Activated CD4-positive, alpha-beta memory T cell treated with anti-CD3 and anti-CD28 coated beads, Interleukin-2, amount 10 ng/mL, durations not matched to agents 7 days and 5 days (primary cell): ENCODE measurements at regions of chr22 and their contacts with region 1.

Region 1: DNA sequence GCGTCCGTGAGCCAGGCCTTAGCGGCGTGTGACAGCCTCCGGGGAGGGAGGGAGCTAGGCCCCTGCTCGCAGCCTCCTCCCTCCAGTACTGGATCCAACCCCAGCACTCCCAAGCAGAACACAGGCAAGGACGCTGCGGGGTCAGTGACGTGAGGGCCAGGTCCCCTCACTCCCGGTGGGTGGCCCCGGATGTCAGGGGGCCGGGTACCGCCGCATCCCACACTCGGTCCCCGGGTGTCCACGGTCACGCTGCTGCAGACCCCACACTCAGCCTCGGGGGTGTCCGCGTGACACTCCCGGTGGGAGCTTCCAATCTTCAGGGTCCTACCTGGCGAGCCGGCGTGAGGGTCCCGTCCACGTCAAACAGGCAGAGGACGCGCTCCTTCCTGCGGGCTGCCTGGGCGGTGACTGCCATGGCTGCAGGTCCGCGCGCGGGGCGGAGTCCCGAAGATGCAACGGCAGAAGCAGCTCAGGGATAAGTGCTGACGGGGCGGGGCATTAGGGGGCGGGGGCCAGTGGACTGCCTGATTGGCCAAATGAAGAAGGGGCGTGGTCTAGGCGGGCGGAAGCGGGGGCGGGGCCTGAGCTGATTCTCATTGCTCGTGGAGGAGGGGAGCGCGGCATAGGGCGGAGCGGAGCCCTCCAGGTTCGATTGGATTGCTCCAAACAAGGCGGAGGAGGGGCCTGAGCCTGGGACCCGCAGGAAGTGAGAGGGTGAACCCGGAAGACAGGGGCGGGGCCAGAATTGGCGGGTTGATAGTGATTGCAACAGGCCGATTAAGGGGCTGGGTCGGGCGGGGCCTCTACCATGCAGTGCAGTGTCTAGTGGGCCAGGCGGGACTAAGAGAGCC is at the start of gene PMM1:
- DNase-seq: peak; percentile 100
- H3K4me3 Mint-ChIP-seq: peak within 1 kb of the TSS; percentile 96
- H3K27ac Mint-ChIP-seq: peak within 1 kb of the TSS; percentile 87
- H3K4me1 Mint-ChIP-seq: peaks cover 26% of the 10 kb centered on the region
- H3K27me3 Mint-ChIP-seq: no peaks in the 10 kb centered on the region
- total RNA-seq, gene PMM1: 44.4 to 46.2 TPM

Region 2: GRCh38 chr22:41381329-41382097 is 208.1 kb before region 1 on chr22 and contains the start of gene TEF:
- CTCF ChIA-PET with region 1: interaction called, 4 read pairs
- POLR2A ChIA-PET with region 1: interaction called, 11 read pairs
- DNase-seq: peak; percentile 98
- H3K4me3 Mint-ChIP-seq: peak within 1 kb of the TSS; percentile 88
- H3K27ac Mint-ChIP-seq: peak within 1 kb of the TSS; percentile 89
- H3K4me1 Mint-ChIP-seq: peaks cover 15% of the 10 kb centered on the region
- H3K27me3 Mint-ChIP-seq: peaks cover under 1% of the 10 kb centered on the region
- total RNA-seq, gene TEF: 2.3 to 3.3 TPM

Region 3: GRCh38 chr22:41448189-41448808 is 141.3 kb before region 1 on chr22:
- CTCF ChIA-PET with region 1: interaction called, 3 read pairs
- POLR2A ChIA-PET with region 1: interaction called, 13 read pairs
- DNase-seq: peak; percentile 94
- H3K4me3 Mint-ChIP-seq: peak overlapping the region; percentile 95
- H3K27ac Mint-ChIP-seq: peak overlapping the region; percentile 93
- H3K4me1 Mint-ChIP-seq: peaks cover 22% of the 10 kb centered on the region
- H3K27me3 Mint-ChIP-seq: no peaks in the 10 kb centered on the region

Region 4: DNA sequence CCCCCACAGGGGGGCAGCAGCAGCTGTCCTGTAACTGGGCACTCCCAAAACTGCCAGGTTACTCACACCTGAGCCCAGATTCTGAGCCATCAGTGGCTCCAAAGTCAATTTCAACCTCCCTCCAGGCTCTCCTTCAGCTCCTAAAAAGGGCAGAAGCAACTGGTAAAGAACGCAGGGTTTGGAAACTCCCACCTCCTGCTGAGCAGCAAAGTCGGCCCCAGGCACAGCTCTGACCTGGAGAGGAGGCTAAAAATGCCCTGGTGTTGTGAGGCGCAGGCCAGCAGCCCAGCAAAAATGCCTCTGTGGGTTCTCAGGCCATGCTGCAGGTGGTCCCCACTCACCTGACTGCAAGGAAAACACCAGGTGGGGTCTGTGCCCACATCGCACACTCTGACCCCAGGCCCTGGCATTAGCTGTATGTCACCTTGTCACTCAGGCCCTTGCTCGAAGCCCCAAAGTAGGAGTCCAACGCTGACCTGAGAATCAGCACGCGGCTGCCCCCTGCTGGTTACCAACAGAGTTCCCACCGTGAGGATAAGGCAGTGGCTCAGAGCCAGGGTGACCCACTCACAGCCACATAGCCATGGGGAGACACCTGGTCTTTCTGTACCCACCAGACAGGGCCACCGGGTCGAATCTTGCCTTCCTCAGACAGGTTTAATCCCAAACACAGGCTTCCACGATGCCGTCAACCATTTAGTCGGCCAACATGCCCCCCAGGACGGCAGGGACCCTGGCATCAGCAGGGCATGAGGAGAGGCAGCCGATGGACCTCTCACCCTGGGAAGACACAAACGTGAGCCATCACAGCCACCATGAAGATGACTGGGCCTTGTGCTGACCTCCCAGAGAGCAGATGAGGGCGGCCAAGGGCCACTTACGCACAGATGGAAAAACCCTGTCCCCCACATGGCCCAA is 56.4 kb before region 1 on chr22:
- CTCF ChIA-PET with region 1: no interaction called
- POLR2A ChIA-PET with region 1: no interaction called
- DNase-seq: peak; percentile 79
- H3K4me3 Mint-ChIP-seq: no peak overlapping the region
- H3K27ac Mint-ChIP-seq: peak overlapping the region; percentile 21
- H3K4me1 Mint-ChIP-seq: no peaks in the 10 kb centered on the region
- H3K27me3 Mint-ChIP-seq: no peaks in the 10 kb centered on the region

Region 5: DNA sequence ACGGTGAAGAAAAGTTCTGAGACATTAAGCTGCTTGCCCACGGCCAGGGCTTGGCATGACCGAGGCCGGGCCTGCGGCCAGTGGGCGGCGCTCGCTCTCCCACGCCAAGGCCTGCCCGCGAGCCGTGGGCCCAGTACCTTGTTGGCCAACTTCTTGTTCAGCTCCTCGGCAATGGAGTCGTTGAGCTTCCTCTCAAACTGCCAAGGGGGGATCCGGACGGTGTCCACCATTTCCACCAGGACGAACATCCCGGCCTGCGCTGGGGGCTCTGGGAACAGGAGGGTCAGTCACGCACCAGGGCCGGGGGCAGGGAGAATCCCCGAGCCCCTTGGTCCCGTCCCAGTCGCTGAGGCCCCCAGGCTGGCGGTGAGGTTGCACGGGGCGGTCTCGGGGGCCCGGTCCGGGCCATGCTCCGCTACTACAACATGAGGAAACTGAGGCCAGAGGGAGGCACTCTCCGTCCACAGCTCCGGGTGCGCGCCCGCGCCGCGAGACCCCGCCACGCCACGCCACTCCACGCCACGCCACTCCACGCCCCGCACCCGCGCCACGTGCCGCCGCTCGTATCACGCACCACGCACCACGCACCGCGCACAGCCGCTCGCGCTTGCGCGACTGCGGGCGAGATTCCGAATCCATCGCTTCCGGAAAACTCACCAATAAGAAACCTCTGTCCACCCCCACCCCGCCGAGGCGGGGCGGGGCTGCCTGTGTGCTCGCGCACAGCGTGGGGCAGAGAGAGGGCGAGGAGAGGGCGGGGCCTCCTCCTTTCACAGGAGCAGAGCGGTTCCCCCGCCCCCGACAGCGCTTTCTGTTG is 45.6 kb before region 1 on chr22 and contains the start of gene POLR3H:
- CTCF ChIA-PET with region 1: interaction called, 5 read pairs
- POLR2A ChIA-PET with region 1: interaction called, 14 read pairs
- DNase-seq: peak; percentile 97
- H3K4me3 Mint-ChIP-seq: peak within 1 kb of the TSS; percentile 98
- H3K27ac Mint-ChIP-seq: peak within 1 kb of the TSS; percentile 88
- H3K4me1 Mint-ChIP-seq: peaks cover 45% of the 10 kb centered on the region
- H3K27me3 Mint-ChIP-seq: no peaks in the 10 kb centered on the region
- total RNA-seq, gene POLR3H: 19.2 to 20.5 TPM

Region 6: GRCh38 chr22:41576877-41577276 is 12.7 kb before region 1 on chr22:
- CTCF ChIA-PET with region 1: interaction called, 15 read pairs
- POLR2A ChIA-PET with region 1: interaction called, 18 read pairs
- DNase-seq: peak; percentile 50
- H3K4me3 Mint-ChIP-seq: no peak overlapping the region
- H3K27ac Mint-ChIP-seq: no peak overlapping the region
- H3K4me1 Mint-ChIP-seq: peaks cover 6% of the 10 kb centered on the region
- H3K27me3 Mint-ChIP-seq: no peaks in the 10 kb centered on the region

Region 7: DNA sequence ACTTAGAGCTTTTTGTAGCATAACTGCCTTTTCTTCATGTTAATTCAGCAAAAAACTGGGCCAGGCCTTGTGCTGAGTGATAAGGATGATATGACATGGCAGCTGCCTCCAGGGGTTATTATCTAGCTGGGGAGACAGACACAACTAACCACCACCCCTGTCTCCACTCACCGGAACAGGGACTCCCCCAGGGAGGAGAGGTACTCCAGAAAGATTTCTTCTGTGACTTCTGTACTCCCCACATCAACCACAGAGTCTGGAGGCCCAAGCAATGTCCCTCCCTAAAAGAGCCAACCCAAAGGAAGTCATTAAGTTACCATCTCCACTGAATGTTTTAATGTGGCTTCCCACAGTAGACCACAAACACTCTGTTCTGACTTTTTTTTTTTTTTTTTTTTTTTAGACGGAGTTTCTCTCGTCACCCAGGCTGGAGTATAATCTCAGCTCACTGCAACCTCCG is 14.3 kb after region 1 on chr22:
- CTCF ChIA-PET with region 1: interaction called, 10 read pairs
- POLR2A ChIA-PET with region 1: interaction called, 23 read pairs
- DNase-seq: peak; percentile 77
- H3K4me3 Mint-ChIP-seq: peak overlapping the region; percentile 50
- H3K27ac Mint-ChIP-seq: peak overlapping the region; percentile 72
- H3K4me1 Mint-ChIP-seq: peaks cover 38% of the 10 kb centered on the region
- H3K27me3 Mint-ChIP-seq: peaks cover 4% of the 10 kb centered on the region

Region 8: DNA sequence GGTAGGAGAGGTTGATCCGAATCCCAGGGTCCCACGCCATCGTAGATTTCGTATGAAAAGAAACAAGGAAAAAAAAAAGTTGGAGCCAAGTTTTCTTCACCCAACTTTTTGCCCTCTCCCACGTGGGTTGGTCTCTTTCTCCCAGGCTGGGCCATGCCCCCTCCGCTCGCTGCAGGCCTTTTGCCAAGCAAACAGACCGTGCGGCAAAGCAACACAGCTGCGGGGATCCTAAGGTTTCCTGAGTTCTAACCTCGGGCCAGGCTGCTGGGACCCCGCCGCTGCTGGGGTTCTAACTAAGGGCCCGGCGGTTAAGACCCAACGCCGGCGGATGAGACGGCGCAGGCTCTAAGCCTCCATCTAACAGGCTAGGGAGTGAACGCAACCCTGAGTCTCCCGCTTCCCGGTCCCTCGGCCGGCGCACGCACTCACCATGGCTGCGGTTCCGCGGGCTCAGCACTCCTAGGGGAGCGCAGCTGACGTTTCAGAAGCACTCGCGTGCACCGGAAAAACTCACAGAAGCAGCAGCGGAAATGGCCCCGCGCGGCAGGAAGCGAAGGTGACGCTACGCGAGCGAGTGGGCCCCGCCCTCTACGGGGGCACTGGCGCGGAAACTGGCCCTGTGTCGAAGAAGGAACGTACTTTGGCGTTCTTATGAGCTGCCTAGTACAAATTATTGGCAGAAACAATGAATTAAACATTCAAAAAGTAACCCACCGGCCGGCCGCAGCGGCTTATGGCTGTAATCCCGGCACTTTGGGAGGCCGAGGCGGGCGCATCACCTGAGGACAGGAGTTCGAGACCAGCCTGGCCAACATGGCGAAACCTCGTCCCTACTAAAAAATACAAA is 99.0 kb after region 1 on chr22 and contains the start of gene SNU13:
- CTCF ChIA-PET with region 1: no interaction called
- POLR2A ChIA-PET with region 1: interaction called, 18 read pairs
- DNase-seq: peak; percentile 95
- H3K4me3 Mint-ChIP-seq: peak within 1 kb of the TSS; percentile 95
- H3K27ac Mint-ChIP-seq: peak within 1 kb of the TSS; percentile 92
- H3K4me1 Mint-ChIP-seq: peaks cover 40% of the 10 kb centered on the region
- H3K27me3 Mint-ChIP-seq: no peaks in the 10 kb centered on the region
- total RNA-seq, gene SNU13: 166 to 176 TPM